Mammary epithelial cell (primary cell): ENCODE measurements at regions of chr2 and their contacts with region 1.

Region 1: DNA sequence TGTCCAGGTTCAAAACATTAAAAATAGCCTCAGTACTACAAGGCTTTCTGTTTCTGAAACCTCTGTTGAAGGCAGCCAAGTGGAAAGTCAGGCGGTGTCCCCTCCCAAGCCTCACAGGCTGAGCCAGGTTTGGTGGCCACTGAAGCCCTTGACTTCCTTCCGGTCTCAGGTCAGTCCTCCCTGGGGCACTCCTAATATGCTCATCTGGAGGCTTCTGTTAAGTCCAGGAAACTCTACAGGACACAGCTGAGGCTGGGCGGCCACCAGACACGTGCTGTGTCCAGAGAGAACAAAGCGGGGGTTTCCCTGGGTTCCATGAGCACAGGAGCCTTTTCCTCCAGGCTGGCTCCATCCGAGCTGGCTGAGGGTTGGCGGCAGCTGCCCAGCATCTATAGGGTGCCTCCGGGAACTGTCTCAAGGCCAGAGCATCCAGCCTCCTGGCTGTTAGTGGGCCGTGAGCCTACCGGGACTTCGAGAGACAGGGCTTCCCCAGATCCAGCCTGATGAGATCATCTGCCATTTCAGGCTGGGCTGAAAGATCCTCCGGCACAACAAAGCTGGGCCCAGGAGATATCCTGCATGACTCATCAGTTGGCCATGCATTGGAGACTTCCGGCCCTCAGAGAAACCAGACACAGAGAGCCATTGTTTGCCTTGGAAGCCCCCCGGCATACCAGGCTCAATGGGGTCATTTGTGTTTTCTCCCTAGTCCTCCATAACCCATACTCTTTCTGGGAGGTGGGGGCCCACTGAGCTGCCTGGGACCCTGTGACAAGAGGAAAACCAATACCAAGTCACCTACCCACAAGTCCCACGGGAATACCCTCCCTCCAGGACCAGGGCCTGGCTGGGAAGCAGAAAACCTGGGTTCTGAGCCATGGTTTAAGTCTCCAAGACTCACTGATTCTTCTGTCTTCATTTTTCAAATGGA is 71.7 kb downstream of the HS1BP3 start:
- DNase-seq: peak; percentile 97
- H3K4me3 ChIP-seq: no peak overlapping the region
- H3K27ac ChIP-seq: peak overlapping the region; percentile 88
- H3K4me1 ChIP-seq: peaks cover 41% of the 10 kb centered on the region
- H3K27me3 ChIP-seq: no peaks in the 10 kb centered on the region
- CTCF ChIP-seq: no peak

Region 2: DNA sequence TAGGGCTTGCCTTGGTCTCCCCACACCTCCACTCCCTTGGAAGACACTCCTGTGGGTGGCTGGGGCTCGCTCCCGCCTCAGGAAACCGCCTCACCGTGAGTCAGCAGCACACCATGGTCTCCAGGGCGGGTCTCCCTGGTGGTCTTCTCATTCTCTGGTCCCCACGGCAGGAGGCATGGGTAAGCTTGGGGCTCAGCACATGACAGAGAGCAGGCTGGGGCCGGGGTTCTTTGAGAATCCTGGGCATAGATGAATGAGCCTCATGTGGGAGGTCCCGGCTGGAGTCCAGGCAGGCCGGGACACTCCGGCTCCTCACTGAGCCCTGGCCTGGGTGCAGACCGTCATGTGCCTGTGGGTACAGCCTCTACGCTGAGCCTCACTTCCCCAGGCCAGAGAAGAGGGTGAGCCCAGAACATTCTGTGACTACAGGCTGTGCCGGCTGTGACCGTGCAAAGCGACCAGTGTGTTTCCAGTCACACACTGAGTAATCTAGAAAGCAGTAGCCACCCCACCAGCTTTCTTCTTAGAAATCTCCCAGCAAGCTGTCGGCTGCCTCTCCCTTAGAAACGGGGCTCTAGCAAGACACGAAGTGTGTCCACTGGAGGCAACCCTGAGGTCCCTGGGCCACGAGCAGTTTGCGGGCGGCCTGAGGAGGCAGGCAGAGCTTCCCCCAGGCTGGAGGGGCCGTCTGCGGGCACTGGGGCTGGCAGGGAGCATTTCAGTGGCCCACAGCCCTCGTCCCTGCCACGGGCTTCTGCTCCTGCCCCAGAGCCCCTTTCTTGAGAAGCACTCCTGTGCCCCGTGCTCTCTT is 39.2 kb before region 1 on chr2:
- CTCF ChIA-PET with region 1: no interaction called
- dilution Hi-C with region 1: no loop called
- in situ Hi-C with region 1: no loop called
- intact Hi-C with region 1: loop called (anchors 1 kb)
- DNase-seq: no peak
- H3K4me3 ChIP-seq: no peak overlapping the region
- H3K27ac ChIP-seq: no peak overlapping the region
- H3K4me1 ChIP-seq: peaks cover 8% of the 10 kb centered on the region
- H3K27me3 ChIP-seq: no peaks in the 10 kb centered on the region
- CTCF ChIP-seq: no peak

Region 3: GRCh38 chr2:20551260-20551944 is 27.8 kb before region 1 on chr2:
- CTCF ChIA-PET with region 1: no interaction called
- dilution Hi-C with region 1: no loop called
- in situ Hi-C with region 1: no loop called
- intact Hi-C with region 1: no loop called
- DNase-seq: no peak
- H3K4me3 ChIP-seq: no peak overlapping the region
- H3K27ac ChIP-seq: no peak overlapping the region
- H3K4me1 ChIP-seq: no peaks in the 10 kb centered on the region
- H3K27me3 ChIP-seq: no peaks in the 10 kb centered on the region
- CTCF ChIP-seq: no peak